ENCODE measurements at regions of chr6 and their contacts with region 1.

Region 1: DNA sequence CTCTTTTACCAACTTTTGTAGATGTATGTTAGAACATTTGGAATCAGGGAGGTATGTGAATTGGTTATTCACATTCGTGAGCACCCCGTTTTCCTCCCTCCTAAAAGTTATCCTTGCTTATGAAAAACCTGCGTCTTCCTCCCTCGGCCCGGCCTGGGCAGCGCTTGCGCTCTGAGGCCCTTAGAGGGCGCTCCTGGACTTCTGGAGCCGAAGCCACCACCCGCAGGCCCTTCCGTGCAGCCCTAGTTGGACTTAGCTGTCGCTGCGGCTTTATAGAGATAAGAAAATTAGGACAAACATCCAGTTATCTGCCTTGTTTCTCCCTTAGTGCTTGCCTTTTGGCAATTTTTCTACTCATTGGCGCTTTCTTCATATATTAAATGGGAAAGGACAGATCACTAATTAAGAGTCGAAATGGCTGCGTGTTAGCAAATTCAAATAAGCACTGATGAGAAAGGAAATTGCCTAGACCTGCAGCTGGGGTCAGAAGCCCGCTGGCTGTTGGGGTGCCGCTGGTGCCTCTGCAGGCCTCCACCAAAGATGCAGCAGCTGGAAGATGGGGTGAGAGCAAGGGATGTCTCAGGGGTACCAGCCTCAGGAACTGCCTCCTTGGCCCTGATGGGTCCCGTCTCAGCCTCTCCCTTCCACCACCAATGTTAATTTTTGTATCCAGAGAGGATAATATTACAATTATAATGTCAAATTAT is 5.2 kb downstream of the FNDC1 start:
- DNase-seq: peak; percentile 72 to 89 (median 83)
- H3K4me3 ChIP-seq: no peak overlapping the region
- H3K27ac ChIP-seq: no peak overlapping the region
- H3K4me1 ChIP-seq: peaks cover 0 to 9% of the 10 kb centered on the region in 2 donors
- H3K27me3 ChIP-seq: peaks cover 37% of the 10 kb centered on the region
- CTCF ChIP-seq: peak; percentile 78 to 95 (median 85)
- POLR2A ChIP-seq: no peak

Region 2: GRCh38 chr6:159249128-159249527 is 74.7 kb after region 1 on chr6:
- intact Hi-C with region 1: no loop called
- DNase-seq: no peak
- H3K4me3 ChIP-seq: no peak overlapping the region
- H3K27ac ChIP-seq: no peak overlapping the region
- H3K4me1 ChIP-seq: no peaks in the 10 kb centered on the region
- H3K27me3 ChIP-seq: no peaks in the 10 kb centered on the region
- CTCF ChIP-seq: no peak
- POLR2A ChIP-seq: no peak

Region 3: DNA sequence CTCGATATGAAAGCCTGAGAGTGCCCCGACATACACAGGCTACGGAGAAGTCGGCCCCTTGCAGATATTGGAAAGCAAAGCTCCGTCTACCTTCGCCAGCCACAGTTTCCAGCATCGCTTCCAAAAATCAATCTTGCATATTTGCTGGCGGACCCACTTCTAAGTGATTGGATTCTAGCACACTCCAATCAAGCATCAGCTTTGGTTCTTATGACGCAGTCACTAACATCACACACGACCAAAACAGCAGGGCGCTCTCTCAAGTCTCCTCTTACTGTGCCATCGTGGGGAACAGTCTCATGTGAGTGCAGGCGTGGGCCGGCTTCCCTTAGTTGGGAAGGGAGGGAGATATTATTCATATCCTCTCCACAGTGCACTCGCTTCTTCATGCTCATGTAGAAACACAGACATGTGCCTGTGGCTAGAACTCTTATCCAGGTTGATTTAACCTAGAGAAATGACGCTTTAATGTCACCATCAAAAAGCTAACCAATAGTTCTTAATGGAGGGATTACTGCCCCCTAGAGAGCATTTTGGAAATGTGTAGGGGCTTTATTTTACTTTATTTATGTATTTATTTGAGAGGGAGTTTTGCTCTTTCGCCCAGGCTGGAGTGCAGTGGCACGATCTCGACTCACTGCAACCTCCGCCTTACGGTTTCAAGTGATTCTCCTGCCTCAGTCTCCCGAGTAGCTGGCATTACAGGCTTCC is 288.9 kb after region 1 on chr6:
- intact Hi-C with region 1: loop called in 1 of 2 experiments (anchors 10 kb)
- DNase-seq: no peak
- H3K4me3 ChIP-seq: no peak overlapping the region
- H3K27ac ChIP-seq: no peak overlapping the region
- H3K4me1 ChIP-seq: no peaks in the 10 kb centered on the region
- H3K27me3 ChIP-seq: no peaks in the 10 kb centered on the region
- CTCF ChIP-seq: peak; percentile 6 to 34 (median 26)
- POLR2A ChIP-seq: no peak

Region 4: DNA sequence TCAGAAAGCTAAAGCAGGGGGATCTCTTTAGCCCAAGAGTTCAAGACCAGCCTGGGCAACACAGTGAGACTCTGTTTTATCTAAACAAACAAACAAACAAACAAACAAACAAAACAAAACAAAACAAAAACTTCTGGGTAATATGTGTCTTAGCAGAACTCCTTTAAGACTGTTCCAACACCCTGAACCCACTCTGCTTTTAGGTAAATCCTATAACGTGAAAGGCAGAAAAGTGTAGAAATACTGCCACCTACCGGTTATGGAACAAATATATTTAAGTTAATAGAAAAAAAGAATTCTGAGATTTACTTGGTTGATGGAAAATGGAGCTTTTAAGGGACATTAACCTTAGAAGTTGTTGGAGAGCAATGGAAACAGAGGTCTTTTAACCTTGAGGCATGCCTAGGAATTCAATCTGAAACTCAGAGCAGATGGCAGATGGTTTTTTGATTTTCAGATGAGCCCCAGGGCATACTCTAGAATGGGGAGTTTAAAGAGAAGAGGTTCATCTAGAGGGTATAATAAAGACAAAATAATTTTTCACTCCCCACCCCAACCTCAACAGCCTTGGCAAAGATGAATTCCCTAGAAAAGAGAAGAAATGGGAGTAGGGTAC is 480.2 kb after region 1 on chr6:
- intact Hi-C with region 1: loop called (anchors 5 to 10 kb)
- DNase-seq: no peak
- H3K4me3 ChIP-seq: no peak overlapping the region
- H3K27ac ChIP-seq: no peak overlapping the region
- H3K4me1 ChIP-seq: no peaks in the 10 kb centered on the region
- H3K27me3 ChIP-seq: no peaks in the 10 kb centered on the region
- CTCF ChIP-seq: peak; percentile 52 to 73 (median 72)
- POLR2A ChIP-seq: no peak